Activated T-helper 1 cell treated with anti-CD3 and anti-CD28 coated beads, Interleukin-12 subunit alpha, Interleukin-12 subunit beta, Interleukin-2, Interleukin-4 antibody, amounts not matched to agents 30 ng/mL and 10 ng/mL and 1 ng/mL, durations not matched to agents 14 hours and 24 hours and 36 hours (primary cell): ENCODE measurements at regions of chr6 and their contacts with region 1.

Region 1: GRCh38 chr6:159929819-159930218 is 39.0 kb downstream of the MAS1 start:
- DNase-seq: no peak
- H3K4me3 Mint-ChIP-seq: no peak overlapping the region
- H3K27ac Mint-ChIP-seq: peak overlapping the region; percentile 63
- H3K4me1 Mint-ChIP-seq: peaks cover 28% of the 10 kb centered on the region
- H3K27me3 Mint-ChIP-seq: peaks cover 7% of the 10 kb centered on the region

Region 2: GRCh38 chr6:159017757-159018559 is 911.9 kb before region 1 on chr6:
- intact Hi-C with region 1: loop called (anchors 1 kb)
- DNase-seq: no peak
- H3K4me3 Mint-ChIP-seq: peak overlapping the region; percentile 38
- H3K27ac Mint-ChIP-seq: peak overlapping the region; percentile 92
- H3K4me1 Mint-ChIP-seq: peaks cover 29% of the 10 kb centered on the region
- H3K27me3 Mint-ChIP-seq: no peaks in the 10 kb centered on the region

Region 3: GRCh38 chr6:159693128-159693893 is 236.5 kb before region 1 on chr6 and contains the start of gene SOD2:
- intact Hi-C with region 1: loop called (anchors 1 kb)
- DNase-seq: peak; percentile 75
- H3K4me3 Mint-ChIP-seq: peak within 1 kb of the TSS; percentile 94
- H3K27ac Mint-ChIP-seq: peak within 1 kb of the TSS; percentile 99
- H3K4me1 Mint-ChIP-seq: peaks cover 51% of the 10 kb centered on the region
- H3K27me3 Mint-ChIP-seq: no peaks in the 10 kb centered on the region
- total RNA-seq, gene SOD2: 78.3 and 81.0 TPM in 2 replicates

Region 4: DNA sequence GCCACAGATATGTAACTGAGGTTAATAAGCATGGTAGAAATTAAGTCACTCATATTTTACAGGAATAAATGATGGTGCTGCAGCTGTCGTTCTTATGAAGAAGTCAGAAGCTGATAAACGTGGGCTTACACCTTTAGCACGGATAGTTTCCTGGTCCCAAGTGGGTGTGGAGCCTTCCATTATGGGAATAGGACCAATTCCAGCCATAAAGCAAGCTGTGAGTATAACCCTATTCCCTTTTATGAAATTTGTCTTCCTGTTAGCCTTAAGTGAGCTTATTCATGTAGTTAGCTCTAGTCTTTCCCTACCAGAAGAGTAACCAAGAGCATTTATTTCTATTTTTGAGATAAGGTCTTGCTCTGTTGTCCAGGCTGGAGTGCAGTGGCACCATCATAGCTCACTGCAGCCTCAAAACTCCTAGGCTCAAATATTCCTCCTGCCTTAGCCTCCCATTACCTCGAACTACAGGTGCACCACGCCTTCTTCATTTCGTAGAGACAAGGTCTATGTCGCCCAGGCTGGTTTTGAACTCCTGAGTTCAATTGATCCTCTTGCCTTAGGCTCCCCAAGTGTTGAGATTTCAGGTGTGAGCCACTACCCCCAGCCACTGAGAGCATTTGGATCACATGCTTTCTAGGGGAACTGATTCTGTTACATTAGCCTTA is 152.4 kb before region 1 on chr6:
- intact Hi-C with region 1: no loop called
- DNase-seq: no peak
- H3K4me3 Mint-ChIP-seq: no peak overlapping the region
- H3K27ac Mint-ChIP-seq: no peak overlapping the region
- H3K4me1 Mint-ChIP-seq: peaks cover 14% of the 10 kb centered on the region
- H3K27me3 Mint-ChIP-seq: no peaks in the 10 kb centered on the region

Region 5: DNA sequence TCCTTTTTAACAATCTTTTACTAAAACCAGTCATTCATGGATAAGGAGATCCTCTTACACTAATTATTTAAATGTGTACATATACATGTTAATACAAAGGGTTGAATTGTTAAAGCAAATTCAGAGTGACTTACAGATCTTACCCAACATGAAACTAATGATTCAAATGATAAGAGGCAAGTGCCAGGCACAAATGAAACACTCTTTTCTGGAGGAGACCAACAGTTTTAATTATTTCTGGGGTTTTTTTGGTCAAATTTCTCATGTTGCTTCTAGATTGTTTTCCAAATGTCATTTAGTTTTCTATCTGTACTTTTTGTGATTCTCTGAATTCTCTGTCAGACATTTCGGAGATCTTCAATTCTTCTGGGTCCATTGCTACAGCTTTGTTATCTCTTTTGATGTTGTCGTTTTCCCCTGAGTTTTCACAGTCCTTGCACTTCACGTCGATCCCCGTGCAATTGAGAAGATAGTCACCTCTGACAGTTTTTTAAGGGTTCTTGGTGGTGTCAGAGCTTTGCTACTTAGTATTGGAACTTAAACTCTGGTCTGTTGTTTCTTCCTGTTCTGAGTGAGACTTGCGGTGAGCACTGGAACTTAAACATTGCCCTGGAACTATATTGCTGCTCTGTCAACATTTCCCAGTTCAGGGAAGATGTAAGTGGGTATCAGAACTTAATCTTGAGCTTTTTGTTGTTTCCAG is 15.8 kb before region 1 on chr6:
- intact Hi-C with region 1: loop called (anchors 1 kb)
- DNase-seq: no peak
- H3K4me3 Mint-ChIP-seq: no peak overlapping the region
- H3K27ac Mint-ChIP-seq: no peak overlapping the region
- H3K4me1 Mint-ChIP-seq: peaks cover 12% of the 10 kb centered on the region
- H3K27me3 Mint-ChIP-seq: peaks cover 16% of the 10 kb centered on the region

Region 6: GRCh38 chr6:159968440-159969203 is 38.8 kb after region 1 on chr6 and contains the start of gene IGF2R:
- intact Hi-C with region 1: loop called (anchors 2 kb)
- DNase-seq: peak; percentile 90
- H3K4me3 Mint-ChIP-seq: peak within 1 kb of the TSS; percentile 96
- H3K27ac Mint-ChIP-seq: peak within 1 kb of the TSS; percentile 93
- H3K4me1 Mint-ChIP-seq: peaks cover 34% of the 10 kb centered on the region
- H3K27me3 Mint-ChIP-seq: peaks cover 17% of the 10 kb centered on the region
- total RNA-seq, gene IGF2R: 118 and 126 TPM in 2 replicates

Region 7: DNA sequence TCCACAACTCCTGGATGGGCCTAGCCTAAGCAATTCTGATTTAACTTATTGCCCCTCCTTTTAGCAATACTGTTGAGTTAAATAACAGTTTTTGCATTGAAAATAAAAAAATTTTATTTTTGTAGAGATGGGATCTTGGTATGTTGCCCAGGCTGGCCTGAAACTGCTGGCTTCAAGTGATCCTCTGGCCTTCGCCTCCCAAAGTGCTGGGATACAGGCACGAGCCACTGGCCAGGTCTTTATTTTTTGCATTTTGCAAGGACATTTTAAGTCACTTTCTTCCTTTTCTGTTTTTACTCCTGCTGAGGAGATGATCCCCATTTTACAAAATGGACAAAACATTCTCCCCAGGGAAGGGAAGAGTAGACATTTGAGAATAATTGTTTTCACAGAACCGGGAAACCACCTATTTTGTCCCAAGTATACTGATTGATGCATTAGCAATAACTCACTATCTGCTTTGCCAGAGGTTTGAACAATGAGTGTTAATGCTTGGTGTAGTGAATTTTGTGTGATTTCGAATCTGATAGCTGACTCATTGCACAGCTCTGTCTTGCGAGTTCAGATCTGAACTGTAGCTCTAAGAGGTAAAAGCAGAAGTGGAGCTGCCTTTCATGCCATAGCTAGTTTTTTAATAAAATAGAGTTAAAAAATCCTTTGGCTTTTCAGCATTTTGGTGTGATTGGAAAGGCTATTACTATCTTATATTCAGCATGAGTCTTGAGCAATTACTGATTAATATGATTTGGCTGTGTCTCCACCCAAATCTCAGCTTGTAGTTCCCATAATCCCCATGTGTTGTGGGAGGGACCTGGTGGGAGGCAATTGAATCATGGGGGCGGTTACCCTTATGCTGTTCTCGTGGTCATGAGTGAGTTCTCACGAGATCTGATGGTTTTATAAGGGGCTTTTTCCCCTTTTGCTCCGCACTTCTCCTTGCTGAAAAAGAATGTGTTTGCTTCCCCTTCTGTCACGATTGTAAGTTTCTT is 60.0 kb after region 1 on chr6:
- intact Hi-C with region 1: no loop called
- DNase-seq: no peak
- H3K4me3 Mint-ChIP-seq: no peak overlapping the region
- H3K27ac Mint-ChIP-seq: peak overlapping the region; percentile 49
- H3K4me1 Mint-ChIP-seq: peaks cover 88% of the 10 kb centered on the region
- H3K27me3 Mint-ChIP-seq: no peaks in the 10 kb centered on the region

Region 8: DNA sequence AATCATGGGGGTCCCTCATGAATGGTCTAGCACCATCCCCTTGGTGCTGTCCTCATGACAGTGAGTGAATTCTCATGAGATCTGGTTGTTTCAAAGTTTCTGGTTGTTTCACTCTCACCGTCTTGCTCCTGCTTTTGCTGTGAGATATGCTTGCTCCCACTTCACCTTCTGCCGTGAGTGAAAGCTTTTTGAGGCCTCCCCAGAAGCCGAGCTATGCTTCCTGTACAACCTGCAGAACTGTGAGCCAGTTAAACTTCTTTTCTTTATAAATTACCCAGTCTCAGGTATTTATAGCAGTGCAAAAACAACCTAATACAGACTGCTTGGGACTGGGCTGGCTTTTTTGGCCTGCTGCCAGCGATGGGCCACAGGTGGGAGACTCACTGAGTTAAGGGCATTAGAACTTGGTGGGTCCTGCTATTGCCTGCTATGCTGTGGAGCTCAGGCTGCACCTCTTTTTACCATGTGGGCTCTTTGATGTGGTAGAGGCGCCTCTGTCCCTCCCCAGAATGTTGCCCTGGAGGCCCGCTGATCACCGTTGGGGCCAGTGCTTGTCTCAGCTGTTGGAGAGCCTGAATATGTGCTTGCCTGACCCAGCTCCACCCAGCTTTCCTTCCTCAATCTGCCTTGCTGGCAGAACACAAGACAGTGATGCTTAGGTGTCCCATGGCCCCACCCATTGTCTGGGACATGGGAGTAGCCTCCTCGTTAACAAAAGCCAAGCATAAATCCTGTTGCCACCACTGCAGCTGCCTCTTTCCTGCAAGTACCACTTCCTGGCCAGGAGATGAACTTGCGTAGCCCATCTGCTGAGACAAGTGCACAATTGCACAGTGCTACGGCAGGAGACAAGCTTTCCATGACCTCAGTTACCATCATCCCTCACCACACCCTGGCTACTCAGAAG is 86.2 kb after region 1 on chr6:
- intact Hi-C with region 1: loop called (anchors 1 kb)
- DNase-seq: peak; percentile 64
- H3K4me3 Mint-ChIP-seq: peak overlapping the region; percentile 75
- H3K27ac Mint-ChIP-seq: peak overlapping the region; percentile 98
- H3K4me1 Mint-ChIP-seq: peaks cover 86% of the 10 kb centered on the region
- H3K27me3 Mint-ChIP-seq: no peaks in the 10 kb centered on the region